BJ (cell line): ENCODE measurements at regions of chr22 and their contacts with region 1.

Region 1: DNA sequence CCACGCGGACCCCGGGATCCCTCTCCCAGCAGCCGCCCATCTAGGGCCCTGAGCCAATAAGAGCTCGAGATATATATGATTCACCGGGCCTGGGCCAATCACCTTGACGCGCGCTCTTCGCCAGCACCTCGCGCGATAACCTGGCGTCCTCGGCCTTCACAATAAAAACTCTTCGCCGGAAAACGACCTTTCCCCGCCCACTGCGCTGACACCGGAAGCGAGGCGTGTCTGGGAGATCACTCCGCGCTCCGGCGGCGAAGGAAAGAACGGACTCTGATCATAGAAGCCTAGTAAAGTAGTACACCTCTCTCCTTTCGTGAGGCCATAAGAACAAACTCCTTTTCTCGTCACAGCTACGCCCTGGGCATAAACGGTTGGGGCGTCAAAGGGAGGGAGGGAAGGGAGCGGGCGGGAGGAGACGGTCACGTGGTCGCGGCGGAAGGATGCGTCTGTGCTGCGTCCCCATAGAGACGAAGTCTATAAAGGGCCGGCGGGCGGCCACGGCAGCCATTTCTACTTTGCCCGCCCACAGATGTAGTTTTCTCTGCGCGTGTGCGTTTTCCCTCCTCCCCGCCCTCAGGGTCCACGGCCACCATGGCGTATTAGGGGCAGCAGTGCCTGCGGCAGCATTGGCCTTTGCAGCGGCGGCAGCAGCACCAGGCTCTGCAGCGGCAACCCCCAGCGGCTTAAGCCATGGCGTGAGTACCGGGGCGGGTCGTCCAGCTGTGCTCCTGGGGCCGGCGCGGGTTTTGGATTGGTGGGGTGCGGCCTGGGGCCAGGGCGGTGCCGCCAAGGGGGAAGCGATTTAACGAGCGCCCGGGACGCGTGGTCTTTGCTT is at the start of gene ATF4:
- DNase-seq: peak; percentile 91
- H3K4me3 ChIP-seq: peak within 1 kb of the TSS; percentile 88
- H3K27me3 ChIP-seq: no peaks in the 10 kb centered on the region
- CTCF ChIP-seq: no peak
- polyA plus RNA-seq, gene ATF4: 886 and 999 TPM in 2 replicates

Region 2: DNA sequence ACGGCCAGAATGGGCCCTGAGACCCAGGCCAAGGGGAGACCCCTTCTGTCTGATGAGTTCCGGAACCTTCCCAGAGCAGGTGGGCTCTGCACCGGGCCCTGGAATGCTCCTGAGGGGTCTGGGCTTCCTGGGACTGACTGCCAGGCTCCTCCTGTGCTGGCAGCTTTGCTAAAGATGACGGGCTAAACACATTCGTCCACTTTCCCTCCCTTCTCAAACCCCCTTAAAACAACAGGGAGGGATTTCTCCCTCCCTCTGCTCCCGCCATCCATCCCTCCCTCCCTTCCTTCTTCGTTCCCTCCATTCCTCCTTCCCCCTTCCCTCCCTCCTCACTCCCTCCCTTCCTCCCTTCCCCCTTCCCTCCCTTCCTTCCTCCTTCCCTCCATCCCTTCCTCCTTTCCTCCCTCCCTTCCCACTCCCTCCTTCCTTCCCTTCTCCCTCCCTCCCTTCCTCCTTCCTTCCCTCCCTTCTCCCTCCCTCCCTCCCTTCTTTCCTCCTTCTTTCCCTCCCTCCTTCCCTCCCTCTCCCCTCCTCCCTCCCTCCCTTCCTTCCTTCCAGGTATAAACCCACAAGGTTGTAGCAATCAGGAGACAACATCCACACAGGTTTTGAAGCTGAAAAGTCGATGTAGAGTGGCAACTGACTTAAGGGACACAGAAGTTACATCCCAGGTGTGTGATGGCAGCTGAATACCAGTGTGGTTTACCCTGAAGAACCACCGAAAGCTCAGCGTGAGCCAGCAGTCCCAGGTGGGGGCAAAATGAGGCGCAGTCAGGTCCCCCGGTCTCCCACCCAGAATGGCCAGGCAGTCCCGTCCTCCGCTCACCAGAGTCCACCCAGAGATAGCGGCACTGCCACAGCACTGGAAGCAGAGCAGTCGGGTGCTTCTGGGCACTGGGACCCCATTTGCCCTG is 82.2 kb before region 1 on chr22:
- CTCF ChIA-PET with region 1: interaction called, 11 read pairs
- POLR2A ChIA-PET with region 1: no interaction called
- DNase-seq: no peak
- H3K4me3 ChIP-seq: no peak overlapping the region
- H3K27me3 ChIP-seq: no peaks in the 10 kb centered on the region
- CTCF ChIP-seq: no peak

Region 3: DNA sequence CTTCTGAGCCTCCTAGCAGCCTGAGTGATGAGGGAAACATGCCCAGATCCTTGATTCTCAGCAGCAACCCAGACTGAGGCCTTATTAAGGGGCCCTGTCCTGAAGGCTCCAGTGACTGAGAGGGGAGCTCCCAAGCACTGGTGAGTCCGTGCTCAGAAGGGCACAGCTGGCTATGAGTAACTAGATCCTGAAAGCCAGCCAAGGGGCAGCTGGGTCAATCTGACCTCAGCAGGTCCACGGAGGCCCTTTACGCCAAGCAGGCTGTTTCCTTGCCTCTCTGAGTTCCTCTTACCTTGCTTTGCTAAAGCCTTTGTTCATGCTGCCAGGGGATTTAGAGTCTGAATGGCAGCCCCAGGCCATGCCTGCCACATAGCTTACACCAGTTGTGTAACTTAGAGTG is 37.5 kb before region 1 on chr22:
- CTCF ChIA-PET with region 1: no interaction called
- POLR2A ChIA-PET with region 1: no interaction called
- DNase-seq: no peak
- H3K4me3 ChIP-seq: no peak overlapping the region
- H3K27me3 ChIP-seq: peaks cover 2% of the 10 kb centered on the region; the same call in 1 of the 2 replicates
- CTCF ChIP-seq: no peak

Region 4: DNA sequence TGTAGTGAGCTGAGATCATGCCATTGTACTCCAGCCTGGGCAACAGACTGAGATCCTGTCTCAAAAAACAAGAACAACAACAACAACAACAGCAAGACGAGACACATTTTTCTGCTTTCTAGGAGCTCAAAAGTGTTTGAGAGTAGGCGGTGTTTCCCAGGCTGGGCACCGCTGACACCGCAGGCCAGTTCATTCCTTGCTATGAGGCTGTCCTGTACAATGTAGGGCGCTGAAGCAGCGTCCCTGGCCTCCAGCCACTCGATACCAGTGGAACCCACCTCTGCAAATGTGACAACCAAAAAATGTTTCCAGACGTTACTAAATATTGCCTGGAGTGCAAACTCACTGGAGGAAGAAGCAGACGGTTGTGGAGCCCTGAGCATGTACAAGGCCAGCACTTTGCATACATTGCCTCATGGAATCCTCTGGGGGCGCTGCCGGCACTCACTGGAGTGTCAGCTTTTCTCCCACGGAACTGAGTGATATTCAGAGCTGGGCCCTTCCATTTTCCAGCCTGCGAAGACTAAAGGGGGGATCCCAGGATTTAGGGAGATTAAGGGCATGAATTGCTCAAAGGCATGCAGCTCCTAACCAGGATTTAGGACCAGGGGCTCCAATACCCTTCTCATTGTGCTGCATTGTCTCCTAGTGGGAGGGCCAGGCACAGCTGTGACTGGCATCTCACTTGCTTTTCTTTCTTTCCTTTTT is 24.0 kb before region 1 on chr22:
- CTCF ChIA-PET with region 1: interaction called, 22 read pairs
- POLR2A ChIA-PET with region 1: interaction called, 5 read pairs
- DNase-seq: no peak
- H3K4me3 ChIP-seq: no peak overlapping the region
- H3K27me3 ChIP-seq: peaks cover 1% of the 10 kb centered on the region; the same call in 1 of the 2 replicates
- CTCF ChIP-seq: peak; percentile 86

Region 5: GRCh38 chr22:39502109-39502788 is 18.0 kb before region 1 on chr22 and contains the start of gene MIEF1:
- CTCF ChIA-PET with region 1: interaction called, 20 read pairs
- POLR2A ChIA-PET with region 1: interaction called, 12 read pairs
- DNase-seq: peak; percentile 70
- H3K4me3 ChIP-seq: peak within 1 kb of the TSS; percentile 77
- H3K27me3 ChIP-seq: peaks cover 1% of the 10 kb centered on the region; the same call in 1 of the 2 replicates
- CTCF ChIP-seq: no peak; the same call in 1 of the 2 replicates
- polyA plus RNA-seq, gene MIEF1: 17.5 and 21.0 TPM in 2 replicates

Region 6: DNA sequence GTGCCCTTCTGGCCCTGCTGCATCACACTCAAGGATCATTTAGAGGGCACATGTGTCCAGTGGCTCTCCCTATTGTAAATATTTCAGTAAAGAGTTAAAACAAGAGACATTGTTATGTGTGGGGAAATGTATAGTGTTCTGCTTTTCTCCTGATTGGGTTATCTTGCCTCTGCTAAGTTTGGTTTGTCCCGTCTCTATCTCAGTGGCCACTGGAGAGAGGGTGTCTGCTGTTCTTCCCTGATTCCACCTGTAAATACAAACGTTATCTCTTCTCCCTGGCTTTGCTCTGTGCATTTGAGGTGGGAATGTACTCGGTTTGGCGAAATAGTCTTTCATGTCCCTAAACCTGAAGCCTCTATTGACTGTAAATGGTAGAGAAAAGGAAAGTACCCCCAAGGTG is 11.9 kb before region 1 on chr22:
- CTCF ChIA-PET with region 1: interaction called, 16 read pairs
- POLR2A ChIA-PET with region 1: interaction called, 5 read pairs
- DNase-seq: no peak
- H3K4me3 ChIP-seq: no peak overlapping the region
- H3K27me3 ChIP-seq: no peaks in the 10 kb centered on the region
- CTCF ChIP-seq: no peak

Region 7: GRCh38 chr22:40044102-40044869 is 524.0 kb after region 1 on chr22:
- CTCF ChIA-PET with region 1: no interaction called
- POLR2A ChIA-PET with region 1: interaction called, 18 read pairs
- DNase-seq: peak; percentile 96
- H3K4me3 ChIP-seq: peak overlapping the region; percentile 80
- H3K27me3 ChIP-seq: peaks cover 6% of the 10 kb centered on the region
- CTCF ChIP-seq: no peak